CD8-positive, alpha-beta T cell (primary cell): ENCODE measurements at regions of chr1 and their contacts with region 1.

Region 1: DNA sequence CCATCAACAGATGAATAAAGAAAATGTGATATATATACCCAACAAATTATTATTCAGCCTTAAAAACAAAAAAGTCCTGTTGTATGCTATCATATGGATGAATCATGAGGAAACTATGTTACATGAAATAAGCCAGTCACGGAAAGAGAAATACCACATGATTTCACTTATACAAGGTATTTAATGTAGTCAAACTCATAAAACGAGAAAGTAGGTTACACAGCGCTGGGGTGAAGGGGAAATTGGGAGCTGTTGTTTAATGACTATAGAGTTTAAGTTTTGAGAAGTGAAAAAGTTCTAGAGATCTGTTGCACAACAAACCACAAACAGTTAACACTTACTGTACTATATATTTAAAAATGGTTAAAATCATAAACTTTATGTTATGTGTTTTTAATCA is 58.5 kb downstream of the SLC25A24 start:
- DNase-seq: no peak
- ATAC-seq: no peak
- H3K4me3 ChIP-seq: no peak overlapping the region
- H3K4me3 Mint-ChIP-seq: no peak overlapping the region
- H3K27ac ChIP-seq: no peak overlapping the region
- H3K27ac Mint-ChIP-seq: no peak overlapping the region
- H3K4me1 ChIP-seq: no peaks in the 10 kb centered on the region
- H3K4me1 Mint-ChIP-seq: no peaks in the 10 kb centered on the region
- H3K27me3 ChIP-seq: no peaks in the 10 kb centered on the region
- H3K27me3 Mint-ChIP-seq: no peaks in the 10 kb centered on the region
- CTCF ChIP-seq: no peak

Region 2: DNA sequence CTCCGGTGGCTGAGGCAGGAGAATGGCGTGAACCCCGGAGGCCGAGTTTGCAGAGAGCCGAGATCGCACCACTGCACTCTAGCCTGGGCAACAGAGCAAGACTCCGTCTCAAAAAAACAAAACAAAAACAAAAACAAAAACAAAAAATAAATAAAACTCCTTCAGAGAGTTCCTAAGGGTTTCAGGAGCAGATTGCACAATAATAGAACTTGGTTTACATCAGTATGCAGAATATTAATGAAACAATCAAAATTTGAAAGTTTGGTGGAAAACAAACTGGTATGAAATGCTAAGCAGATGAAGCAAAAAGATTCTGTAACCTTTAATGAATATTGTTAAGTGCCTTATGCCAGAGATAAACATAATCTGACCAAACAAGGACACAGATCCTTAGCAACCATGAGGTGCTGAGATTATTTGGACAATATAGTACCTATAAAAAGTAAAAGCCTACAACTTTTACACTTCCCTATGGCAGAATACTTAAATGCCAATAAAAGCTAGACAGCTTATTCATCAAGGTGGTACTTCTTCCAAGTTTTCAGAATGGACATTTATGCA is 17.4 kb after region 1 on chr1:
- CTCF ChIA-PET with region 1: no interaction called
- POLR2A ChIA-PET with region 1: no interaction called
- intact Hi-C with region 1: loop called in 1 of 2 experiments (anchors 2 kb)
- DNase-seq: no peak
- ATAC-seq: no peak
- H3K4me3 ChIP-seq: no peak overlapping the region
- H3K4me3 Mint-ChIP-seq: no peak overlapping the region
- H3K27ac ChIP-seq: no peak overlapping the region
- H3K27ac Mint-ChIP-seq: no peak overlapping the region
- H3K4me1 ChIP-seq: no peaks in the 10 kb centered on the region
- H3K4me1 Mint-ChIP-seq: no peaks in the 10 kb centered on the region
- H3K27me3 ChIP-seq: no peaks in the 10 kb centered on the region
- H3K27me3 Mint-ChIP-seq: no peaks in the 10 kb centered on the region
- CTCF ChIP-seq: no peak